AG04450 (cell line): ENCODE measurements at regions of chr14 and their contacts with region 1.

Region 1: DNA sequence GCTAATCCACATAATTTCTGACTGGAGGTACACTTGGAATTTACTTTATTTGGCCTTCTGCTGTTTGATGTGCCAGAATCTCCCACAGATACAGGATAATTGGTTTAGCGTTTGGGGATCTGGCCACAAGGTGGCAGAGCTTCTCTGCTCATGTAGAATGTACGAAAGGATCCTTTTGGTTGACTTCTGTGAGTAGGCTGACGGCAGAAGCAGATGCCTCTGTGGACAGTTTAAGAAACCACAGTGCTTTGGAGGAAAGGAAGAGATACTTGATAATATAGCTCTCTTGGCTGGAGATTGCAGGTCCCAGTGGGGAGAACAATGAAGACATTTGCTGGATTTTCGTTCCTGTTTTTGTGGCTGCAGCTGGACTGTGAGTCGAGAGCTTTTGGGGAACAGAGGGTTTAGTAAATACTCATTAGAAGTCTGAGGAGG is 75.3 kb upstream of the OR4E1 start:
- DNase-seq: no peak
- H3K4me3 ChIP-seq: no peak overlapping the region
- H3K27ac ChIP-seq: no peak overlapping the region
- H3K27me3 ChIP-seq: no peaks in the 10 kb centered on the region
- CTCF ChIP-seq: peak; percentile 68

Region 2: DNA sequence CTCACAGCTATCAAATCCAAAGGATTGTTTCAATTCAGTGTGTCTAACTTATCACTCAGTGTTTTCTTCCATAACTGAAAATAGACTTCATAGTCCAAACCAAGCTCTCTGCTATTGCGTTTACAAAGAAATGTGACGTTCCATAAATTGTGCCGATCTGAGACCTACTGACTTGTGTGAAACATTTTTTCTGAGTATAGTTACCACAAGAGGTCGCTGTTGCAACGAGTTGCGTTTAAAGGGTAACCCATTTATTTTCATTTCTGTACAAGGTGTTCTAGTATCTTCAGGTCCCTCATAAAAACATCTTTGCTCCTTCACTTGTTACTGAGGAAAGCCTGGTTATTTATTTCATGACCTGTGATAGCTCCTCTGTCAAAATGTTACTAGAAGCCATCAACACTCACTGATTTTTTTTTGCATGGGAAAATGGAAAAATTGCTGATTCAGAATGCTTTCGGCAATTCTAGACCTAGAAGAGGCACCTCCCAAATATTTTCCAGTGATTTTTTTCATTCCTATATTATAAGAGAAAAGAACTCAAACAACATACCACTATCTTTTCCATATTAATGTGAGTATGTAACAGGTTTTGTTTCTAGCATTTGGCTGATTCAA is 14.3 kb before region 1 on chr14:
- CTCF ChIA-PET with region 1: interaction called, 11 read pairs
- POLR2A ChIA-PET with region 1: no interaction called
- DNase-seq: no peak
- H3K4me3 ChIP-seq: no peak overlapping the region
- H3K27ac ChIP-seq: no peak overlapping the region
- H3K27me3 ChIP-seq: no peaks in the 10 kb centered on the region
- CTCF ChIP-seq: peak; percentile 49